Right lobe of liver (tissue), 6 donors: ENCODE measurements at regions of chr10 and their contacts with region 1.

Region 1: DNA sequence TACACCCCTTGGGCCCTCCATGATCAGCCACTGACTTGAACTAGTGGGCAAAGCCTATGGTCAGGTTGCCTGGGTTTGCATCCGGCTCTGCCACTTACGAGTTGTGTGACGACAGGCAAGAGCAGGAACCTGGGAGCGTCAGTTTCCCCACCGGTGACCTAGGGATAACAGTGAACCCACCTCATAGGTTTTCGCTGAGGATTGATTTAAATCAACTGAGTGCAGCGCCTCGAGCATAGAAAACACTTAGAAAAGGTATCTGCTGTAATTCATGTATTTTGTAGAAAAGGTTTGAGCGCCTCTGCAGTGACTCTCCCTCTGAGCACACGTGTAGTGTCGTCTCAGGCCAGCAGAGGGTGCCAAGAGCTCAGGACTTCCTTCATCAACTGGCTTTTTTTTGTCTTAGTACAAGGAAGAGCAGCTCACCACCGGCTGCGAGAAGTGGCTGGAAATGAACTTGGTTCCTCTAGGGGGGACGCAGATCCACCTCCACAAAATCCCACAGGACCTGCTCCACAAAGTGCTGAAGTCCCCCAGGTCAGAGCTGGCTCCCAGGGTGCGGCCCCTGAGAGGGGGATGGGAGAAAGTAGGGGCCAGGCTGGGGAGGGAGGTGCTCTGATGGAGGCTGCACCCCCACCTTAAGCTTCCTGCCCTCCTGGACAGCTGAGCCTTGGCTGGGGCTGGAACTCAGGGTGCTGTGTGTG is 27.7 kb downstream of the BTBD16 start:
- DNase-seq: peak; percentile 69 to 71 (median 70)
- ATAC-seq: peak; percentile 89 to 93 (median 92)
- H3K4me3 ChIP-seq: peak overlapping the region; percentile 25 to 47 (median 40)
- H3K27ac ChIP-seq: peak overlapping the region; percentile 12 to 84 (median 44)
- H3K4me1 ChIP-seq: peaks cover 0 to 19% (median 6%) of the 10 kb centered on the region in 4 donors
- H3K27me3 ChIP-seq: no peaks in the 10 kb centered on the region
- CTCF ChIP-seq: peak; percentile 85 to 96 (median 88)
- POLR2A ChIP-seq: peak; percentile 35

Region 2: DNA sequence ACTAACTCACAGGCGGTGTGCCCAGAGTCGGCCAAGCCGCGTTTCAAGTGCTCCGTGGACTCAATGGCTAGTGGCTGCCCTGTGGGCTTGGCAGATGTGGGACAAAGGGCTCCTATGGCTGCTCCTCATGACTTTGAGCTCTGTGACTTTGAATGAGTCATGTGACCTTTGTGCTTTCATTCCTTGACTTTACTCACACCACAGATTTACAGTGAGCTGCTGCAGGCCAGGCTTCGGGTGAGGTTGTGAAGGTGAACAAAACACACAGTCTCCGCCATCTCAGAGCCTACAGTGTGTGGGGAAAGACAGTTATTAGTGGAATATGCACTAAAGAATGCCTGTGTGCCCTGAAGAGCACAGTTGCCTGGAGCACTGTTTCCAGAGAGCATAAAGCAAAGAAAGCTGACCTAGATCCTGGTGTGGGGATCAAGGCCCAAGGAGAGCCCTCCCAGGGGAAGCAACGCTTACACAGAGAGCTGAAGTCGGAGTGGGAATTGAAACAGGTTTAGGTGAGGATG is 46.0 kb after region 1 on chr10:
- intact Hi-C with region 1: no loop called
- DNase-seq: peak in 1 of 3 donors; percentile 31
- ATAC-seq: peak in 3 of 4 donors; percentile 22 to 79 (median 53)
- H3K4me3 ChIP-seq: no peak overlapping the region
- H3K27ac ChIP-seq: no peak overlapping the region
- H3K4me1 ChIP-seq: peaks cover 0 to 3% (median 0%) of the 10 kb centered on the region in 4 donors
- H3K27me3 ChIP-seq: no peaks in the 10 kb centered on the region
- CTCF ChIP-seq: no peak
- POLR2A ChIP-seq: no peak

Region 3: DNA sequence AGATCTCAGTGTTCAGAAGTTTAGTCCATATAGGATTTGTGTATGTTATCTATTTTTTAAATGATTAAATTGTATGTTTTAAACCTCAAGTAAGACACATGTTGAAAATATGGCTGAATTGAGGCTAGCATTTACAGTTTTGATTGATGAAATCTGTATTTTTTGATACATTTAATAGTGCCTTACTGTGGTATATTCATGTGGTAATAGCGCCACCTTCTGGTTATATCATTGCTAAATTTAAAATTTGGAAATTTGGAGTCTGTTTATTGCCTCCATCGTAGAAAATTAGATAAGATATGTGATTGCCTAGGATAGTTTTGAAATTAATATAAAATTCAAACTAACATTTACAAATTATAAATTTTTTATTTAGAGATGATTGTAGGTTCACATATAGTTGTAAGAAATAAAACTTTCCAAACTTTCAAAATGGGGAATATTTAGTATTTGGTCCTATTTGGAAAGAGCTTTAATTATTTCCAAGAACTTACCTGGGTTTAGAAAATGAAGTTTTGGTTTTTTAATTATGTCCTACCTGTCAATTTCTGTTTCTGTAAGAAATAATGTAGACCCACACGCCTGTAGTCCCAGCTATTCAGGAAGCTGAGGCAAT is 136.6 kb after region 1 on chr10:
- intact Hi-C with region 1: loop called in 1 of 2 experiments (anchors 10 kb)
- DNase-seq: no peak
- ATAC-seq: peak in 3 of 4 donors; percentile 55 to 66 (median 60)
- H3K4me3 ChIP-seq: no peak overlapping the region
- H3K27ac ChIP-seq: no peak overlapping the region
- H3K4me1 ChIP-seq: no peaks in the 10 kb centered on the region
- H3K27me3 ChIP-seq: no peaks in the 10 kb centered on the region
- CTCF ChIP-seq: peak; percentile 64 to 68 (median 68)
- POLR2A ChIP-seq: no peak